ENCODE measurements at regions of chr20 and their contacts with region 1.

Region 1: GRCh38 chr20:44702776-44703175 is 12.4 kb upstream of the CCN5 start:
- DNase-seq: no peak
- H3K4me3 ChIP-seq: no peak overlapping the region
- CTCF ChIP-seq: no peak

Region 2: GRCh38 chr20:44733341-44734069 is 30.7 kb after region 1 on chr20:
- CTCF ChIA-PET with region 1: interaction called, 801 read pairs
- POLR2A ChIA-PET with region 1: interaction called, 6 read pairs
- DNase-seq: no peak
- H3K4me3 ChIP-seq: no peak overlapping the region
- CTCF ChIP-seq: peak; percentile 93

Measured in AG04449 (cell line).